ENCODE measurements at regions of chr19 and their contacts with region 1.

Region 1: DNA sequence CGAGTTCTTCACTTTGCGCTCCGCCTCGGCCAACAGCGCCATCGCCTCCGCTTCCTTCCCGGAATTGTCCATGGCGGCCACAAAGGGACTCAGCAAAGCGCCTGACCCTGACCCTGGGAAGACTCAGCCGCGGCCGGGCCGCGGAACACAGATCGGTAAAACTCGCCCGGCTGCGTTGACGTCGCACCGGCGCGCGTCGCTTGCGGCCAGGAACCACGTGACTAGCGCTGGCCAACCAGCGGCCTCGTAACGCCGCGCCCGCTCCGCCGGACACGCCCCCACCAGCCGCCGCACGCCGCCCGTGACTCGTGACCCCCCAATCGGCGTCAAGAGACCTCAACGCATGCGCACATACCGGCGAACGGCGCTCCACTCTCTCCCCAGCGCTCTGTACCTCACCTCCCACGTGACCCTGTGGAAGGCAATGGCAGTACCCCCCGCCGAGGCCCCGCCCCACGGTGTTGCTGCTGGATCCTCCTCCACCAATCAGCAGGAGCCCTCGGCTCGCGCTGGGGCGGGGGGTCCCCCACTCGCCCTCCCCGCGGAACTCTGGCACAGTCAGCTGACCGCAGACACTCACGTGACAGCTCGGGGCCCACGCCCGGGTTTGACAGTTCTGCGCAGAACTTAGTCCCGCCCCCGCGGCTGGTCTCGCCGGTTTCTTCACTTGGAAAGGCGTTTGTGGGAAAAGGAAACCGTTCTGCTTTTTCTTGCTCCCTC is at the start of gene NAPA:
- DNase-seq: peak; percentile 98
- ATAC-seq: peak; percentile 94
- H3K4me3 ChIP-seq: peak within 1 kb of the TSS; percentile 95
- H3K27ac ChIP-seq: peak within 1 kb of the TSS; percentile 64
- H3K4me1 ChIP-seq: peaks cover 31% of the 10 kb centered on the region
- H3K27me3 ChIP-seq: no peaks in the 10 kb centered on the region
- CTCF ChIP-seq: no peak
- total RNA-seq, gene NAPA: 75.1 and 95.9 TPM in 2 replicates

Region 2: DNA sequence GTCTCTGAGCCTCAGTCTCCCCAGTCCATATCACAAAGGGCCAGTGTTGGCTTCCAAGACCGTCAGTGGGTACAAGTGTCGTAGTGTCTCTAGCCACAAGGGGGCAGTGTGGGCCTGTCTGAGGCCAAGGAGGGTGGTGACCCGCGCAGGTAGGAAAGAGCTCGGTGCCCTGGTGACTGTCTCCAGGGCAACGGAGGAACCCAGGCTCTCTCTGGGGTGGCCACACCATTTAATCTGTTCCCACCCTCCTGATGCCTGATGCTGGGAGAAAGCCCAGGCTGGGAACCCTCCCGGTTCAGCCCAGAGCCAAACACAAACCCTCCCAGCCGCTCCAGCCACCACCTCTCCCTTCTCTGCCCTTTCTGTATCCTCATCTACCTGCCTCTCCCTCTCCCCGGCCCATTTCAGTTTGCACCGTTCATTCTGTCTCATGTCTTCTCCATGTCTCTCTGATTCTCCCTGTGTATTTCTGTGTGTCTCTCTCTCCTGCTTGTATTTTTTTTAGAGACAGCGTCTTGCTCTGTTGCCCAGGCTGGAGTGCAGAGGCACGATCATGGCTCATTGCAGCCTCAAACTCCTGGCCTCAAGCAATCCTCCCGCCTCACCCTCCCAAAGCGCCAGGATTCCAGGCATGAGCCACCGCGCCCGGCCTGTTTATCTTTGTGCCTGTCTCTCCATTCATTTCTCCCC is 78.2 kb before region 1 on chr19:
- CTCF ChIA-PET with region 1: interaction called, 4 read pairs
- POLR2A ChIA-PET with region 1: interaction called, 5 read pairs
- intact Hi-C with region 1: loop called (anchors 10 kb)
- DNase-seq: peak; percentile 74
- ATAC-seq: peak; percentile 90
- H3K4me3 ChIP-seq: no peak overlapping the region
- H3K27ac ChIP-seq: no peak overlapping the region
- H3K4me1 ChIP-seq: no peaks in the 10 kb centered on the region
- H3K27me3 ChIP-seq: no peaks in the 10 kb centered on the region
- CTCF ChIP-seq: peak; percentile 76

Region 3: DNA sequence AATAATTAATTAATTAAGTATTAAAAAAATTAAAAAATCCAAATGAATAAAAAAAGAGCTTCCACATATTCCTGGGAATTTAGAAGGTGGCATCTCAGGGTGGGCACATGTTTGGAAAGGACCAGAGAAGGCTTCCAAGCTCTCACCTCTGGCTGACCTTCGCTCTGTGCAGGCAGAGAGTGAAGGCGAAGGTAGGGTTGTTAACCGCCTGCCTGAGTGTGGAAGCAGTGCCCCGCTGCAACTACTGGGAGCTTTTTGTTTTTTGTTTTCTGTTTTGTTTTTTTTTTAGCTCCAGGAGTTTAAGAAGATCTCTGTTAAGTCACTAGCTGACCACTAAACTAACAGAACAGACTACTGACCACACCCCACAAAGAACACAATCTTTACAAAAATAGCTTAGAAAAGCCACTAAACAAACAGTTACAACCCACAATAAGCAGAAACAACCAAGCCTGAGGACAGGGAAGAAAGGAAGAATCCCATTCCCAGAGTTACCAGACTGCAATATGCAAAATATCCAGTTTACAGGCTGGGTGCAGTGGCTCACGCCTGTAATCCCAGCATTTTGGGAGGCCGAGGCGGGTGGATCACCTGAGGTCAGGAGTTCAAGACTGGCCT is 46.5 kb after region 1 on chr19:
- CTCF ChIA-PET with region 1: no interaction called
- POLR2A ChIA-PET with region 1: no interaction called
- intact Hi-C with region 1: loop called (anchors 5 kb)
- DNase-seq: peak; percentile 71
- ATAC-seq: peak; percentile 93
- H3K4me3 ChIP-seq: no peak overlapping the region
- H3K27ac ChIP-seq: peak overlapping the region; percentile 61
- H3K4me1 ChIP-seq: peaks cover 20% of the 10 kb centered on the region; the same call in 1 of the 2 replicates
- H3K27me3 ChIP-seq: no peaks in the 10 kb centered on the region
- CTCF ChIP-seq: no peak

Region 4: GRCh38 chr19:47608074-47608918 is 93.3 kb after region 1 on chr19:
- CTCF ChIA-PET with region 1: no interaction called
- POLR2A ChIA-PET with region 1: no interaction called
- intact Hi-C with region 1: loop called (anchors 2 kb)
- DNase-seq: peak; percentile 93
- ATAC-seq: peak; percentile 91
- H3K4me3 ChIP-seq: peak overlapping the region; percentile 95
- H3K27ac ChIP-seq: peak overlapping the region; percentile 68
- H3K4me1 ChIP-seq: peaks cover 8% of the 10 kb centered on the region; the same call in 1 of the 2 replicates
- H3K27me3 ChIP-seq: no peaks in the 10 kb centered on the region
- CTCF ChIP-seq: 0 out of 2 replicates have a peak, but pooled peaks have one; percentile 15

Region 5: DNA sequence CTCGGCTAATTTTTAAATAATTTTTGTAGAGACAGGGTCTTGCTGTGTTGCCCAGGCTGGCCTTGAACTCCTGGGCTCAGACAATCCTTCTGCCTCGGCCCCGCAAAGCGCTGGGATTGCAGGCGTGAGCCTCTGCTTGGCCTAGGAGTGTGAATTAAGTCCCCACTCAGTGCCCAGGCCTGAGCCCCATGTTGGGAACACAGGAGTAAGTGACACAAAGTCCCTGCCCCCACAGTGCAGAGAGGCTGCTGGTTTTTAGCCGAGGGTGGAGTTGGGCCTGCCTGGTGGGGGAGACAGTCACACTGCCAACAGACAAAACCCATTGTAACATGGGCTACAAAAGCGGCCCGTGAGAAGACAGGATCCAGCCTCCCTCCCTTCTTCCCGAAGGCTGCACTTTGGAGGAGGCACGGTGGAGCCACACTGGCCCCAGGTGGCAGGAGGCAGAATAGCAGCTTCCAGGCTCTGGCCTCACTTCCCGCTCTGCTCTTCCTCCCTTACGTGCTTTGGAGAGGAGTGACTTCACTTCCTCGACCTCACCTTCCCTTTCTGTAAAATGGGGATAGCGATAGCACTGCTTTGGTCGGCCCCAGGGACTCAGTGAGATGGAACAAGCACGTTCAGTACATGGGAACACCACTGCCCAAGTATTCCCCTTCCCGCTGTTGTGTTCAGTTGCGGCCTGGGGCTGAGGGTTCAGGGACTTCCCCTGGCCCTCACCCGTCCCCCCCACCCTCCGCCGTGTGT is 183.0 kb after region 1 on chr19:
- CTCF ChIA-PET with region 1: no interaction called
- POLR2A ChIA-PET with region 1: no interaction called
- intact Hi-C with region 1: loop called (anchors 10 kb)
- DNase-seq: peak; percentile 83
- ATAC-seq: peak; percentile 86
- H3K4me3 ChIP-seq: no peak overlapping the region
- H3K27ac ChIP-seq: peak overlapping the region; percentile 30
- H3K4me1 ChIP-seq: 0 out of 2 replicates have a peak, but pooled peaks cover 3% of the 10 kb centered on the region
- H3K27me3 ChIP-seq: no peaks in the 10 kb centered on the region
- CTCF ChIP-seq: peak; percentile 88

Region 6: DNA sequence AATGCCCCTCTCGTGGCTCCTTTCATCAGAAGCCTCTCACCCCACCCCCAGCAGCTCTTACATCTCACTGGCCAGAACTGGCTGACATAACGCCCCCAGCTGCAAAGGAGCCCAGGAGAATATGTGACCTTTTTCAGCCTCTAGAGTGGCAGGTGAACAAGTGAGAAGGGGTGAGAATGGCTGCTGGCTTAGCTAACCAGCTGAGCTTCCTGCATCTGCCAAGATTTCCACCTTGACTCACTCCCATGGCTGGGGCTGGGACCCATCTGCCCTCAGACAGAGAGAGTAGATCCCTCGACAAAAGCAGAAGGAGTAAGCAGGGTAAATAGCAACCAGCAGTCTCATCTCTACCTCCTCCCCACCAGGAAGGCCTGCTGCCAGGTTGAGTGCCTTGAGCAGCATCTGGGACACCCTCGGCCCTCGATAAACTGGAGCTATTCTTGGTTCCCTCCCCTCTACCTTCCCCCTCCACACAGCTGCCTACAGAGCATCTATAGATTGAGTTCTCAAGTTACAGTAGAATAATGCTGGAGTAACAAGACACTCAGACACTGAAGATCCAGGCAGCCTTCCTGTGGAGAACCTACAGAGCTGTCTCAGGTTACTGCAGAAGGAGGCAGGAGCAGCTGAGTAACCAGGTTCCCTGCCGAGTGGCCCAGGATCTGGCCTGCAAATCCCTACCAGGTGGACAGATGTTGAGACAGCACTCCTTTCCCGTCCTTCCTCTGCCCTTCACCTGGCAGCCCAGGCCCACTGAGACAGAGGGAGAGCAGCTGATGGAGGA is 1888.6 kb after region 1 on chr19:
- CTCF ChIA-PET with region 1: no interaction called
- POLR2A ChIA-PET with region 1: interaction called, 53 read pairs
- intact Hi-C with region 1: no loop called
- DNase-seq: peak; percentile 89
- ATAC-seq: peak; percentile 99
- H3K4me3 ChIP-seq: 0 out of 2 replicates have a peak overlapping the region, but pooled peaks have one; percentile 9
- H3K27ac ChIP-seq: peak overlapping the region; percentile 29
- H3K4me1 ChIP-seq: peaks cover 15% of the 10 kb centered on the region
- H3K27me3 ChIP-seq: no peaks in the 10 kb centered on the region
- CTCF ChIP-seq: no peak